ENCODE measurements at regions of chr1 and their contacts with region 1.

Region 1: DNA sequence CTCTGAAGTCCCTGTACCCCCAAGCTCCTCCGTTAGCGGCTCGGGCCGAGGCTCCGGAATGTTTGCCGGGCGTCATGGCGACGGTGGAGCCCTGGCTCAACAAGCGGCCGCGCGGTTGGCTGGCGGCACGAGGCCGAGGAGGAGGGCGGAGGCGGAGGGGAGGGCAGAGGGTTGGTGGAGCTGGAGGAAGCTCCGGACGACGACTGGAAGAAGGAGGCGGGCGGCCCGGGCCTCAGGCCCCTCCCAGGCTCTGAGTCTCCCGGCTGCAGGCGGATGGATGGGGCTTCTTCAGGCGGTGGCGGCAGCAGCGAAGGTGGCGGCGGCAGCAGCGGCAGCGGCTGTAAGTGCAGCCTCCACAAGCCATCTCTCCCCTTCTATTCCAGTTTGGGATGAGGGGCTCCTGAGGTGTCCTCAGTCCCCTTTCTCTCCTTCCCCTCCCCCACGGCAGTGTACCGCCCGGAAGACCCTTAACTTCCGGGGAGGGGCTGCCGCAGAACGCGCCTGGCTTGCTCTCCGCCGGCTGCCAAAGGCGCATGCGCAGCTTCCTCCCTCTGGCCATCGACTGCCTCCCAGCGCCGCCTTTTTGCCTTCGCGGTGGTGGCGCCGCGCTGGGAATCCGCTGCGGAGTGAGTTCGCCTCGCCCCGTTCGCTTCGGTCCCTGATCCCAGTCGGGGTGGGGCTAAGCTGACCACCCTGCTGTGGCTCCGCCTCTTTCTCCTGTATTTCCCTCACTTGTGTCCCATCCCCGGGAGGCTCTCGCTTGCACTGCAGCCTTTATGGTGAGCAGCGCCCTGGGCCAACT is at the starts of genes DNAI4 and MIER1:
- DNase-seq: peak; percentile 99
- H3K4me3 Mint-ChIP-seq: peak within 1 kb of the TSS; percentile 95
- H3K27ac Mint-ChIP-seq: peak within 1 kb of the TSS; percentile 96
- H3K4me1 Mint-ChIP-seq: peaks cover 43% of the 10 kb centered on the region
- H3K27me3 Mint-ChIP-seq: no peaks in the 10 kb centered on the region
- CTCF ChIP-seq: no peak
- total RNA-seq, gene DNAI4: 7.2 and 9.6 TPM in 2 replicates
- total RNA-seq, gene MIER1: 32.1 and 36.5 TPM in 2 replicates

Region 2: GRCh38 chr1:66271216-66271903 is 653.6 kb before region 1 on chr1:
- CTCF ChIA-PET with region 1: interaction called, 4 read pairs
- POLR2A ChIA-PET with region 1: no interaction called
- intact Hi-C with region 1: loop called (anchors 10 kb)
- DNase-seq: peak; percentile 97
- H3K4me3 Mint-ChIP-seq: peak overlapping the region; percentile 49
- H3K27ac Mint-ChIP-seq: peak overlapping the region; percentile 92
- H3K4me1 Mint-ChIP-seq: peaks cover 43% of the 10 kb centered on the region
- H3K27me3 Mint-ChIP-seq: no peaks in the 10 kb centered on the region
- CTCF ChIP-seq: no peak

Region 3: DNA sequence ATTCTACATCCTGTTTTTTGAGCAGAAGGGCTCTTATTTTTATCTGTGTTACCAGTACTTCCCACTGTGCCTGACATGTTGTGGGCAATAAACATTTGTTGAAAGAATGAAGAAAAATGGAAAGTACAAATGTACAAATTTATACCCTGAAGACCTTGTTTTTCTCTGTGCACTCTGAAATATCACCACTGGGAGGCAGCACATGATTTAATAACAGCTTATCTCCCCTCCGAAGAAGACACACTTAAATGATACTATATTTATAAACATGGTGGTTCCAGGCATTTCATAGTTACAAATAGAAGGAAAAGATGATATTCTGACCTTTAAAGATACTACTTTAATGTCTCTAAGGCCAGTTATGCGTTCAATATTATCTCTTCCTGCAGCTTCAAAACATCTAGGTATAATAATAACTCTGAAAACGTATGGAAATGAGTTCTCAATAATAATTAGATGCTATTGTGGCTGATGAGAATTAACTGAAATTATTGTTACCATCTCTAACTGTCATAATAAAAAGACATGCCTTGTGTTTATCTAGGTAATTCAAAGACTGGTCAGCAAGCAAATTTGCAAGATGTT is 159.9 kb before region 1 on chr1:
- CTCF ChIA-PET with region 1: interaction called, 6 read pairs
- POLR2A ChIA-PET with region 1: interaction called, 7 read pairs
- intact Hi-C with region 1: loop called (anchors 1 kb)
- DNase-seq: peak; percentile 65
- H3K4me3 Mint-ChIP-seq: no peak overlapping the region
- H3K27ac Mint-ChIP-seq: no peak overlapping the region
- H3K4me1 Mint-ChIP-seq: no peaks in the 10 kb centered on the region
- H3K27me3 Mint-ChIP-seq: no peaks in the 10 kb centered on the region
- CTCF ChIP-seq: peak; percentile 78

Region 4: DNA sequence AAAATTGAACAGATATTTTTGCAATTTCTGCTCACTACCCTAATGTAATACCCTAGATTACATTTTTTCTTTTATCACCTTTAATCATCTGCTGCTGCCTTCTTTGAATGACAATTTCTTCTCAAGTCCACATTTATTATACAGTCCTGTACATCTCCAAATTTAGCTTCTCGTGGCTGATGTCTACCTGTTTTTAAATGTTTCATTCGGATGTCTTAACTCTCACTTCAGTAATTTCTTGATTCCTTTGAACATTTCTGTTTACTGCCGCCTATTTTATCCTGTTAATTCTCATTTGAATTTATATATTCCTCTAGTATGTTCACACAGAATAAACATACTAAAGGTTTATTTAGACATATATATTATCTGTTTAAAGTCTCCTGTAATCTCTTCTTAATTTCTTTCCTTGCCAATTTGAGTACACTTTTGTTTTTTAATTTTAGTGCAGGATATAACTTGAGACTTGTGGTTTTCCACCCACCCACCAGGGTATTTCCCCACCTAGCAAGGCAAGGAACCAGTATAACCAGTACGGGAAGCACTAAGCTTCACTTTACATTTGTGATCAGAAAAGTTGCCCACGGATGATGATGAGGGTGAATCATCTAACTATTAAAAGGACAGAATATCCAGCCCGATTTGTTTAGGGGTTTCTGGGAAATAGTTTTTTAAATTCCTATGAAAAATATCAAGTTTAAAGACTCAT is 136.6 kb before region 1 on chr1:
- CTCF ChIA-PET with region 1: no interaction called
- POLR2A ChIA-PET with region 1: no interaction called
- intact Hi-C with region 1: no loop called
- DNase-seq: no peak
- H3K4me3 Mint-ChIP-seq: no peak overlapping the region
- H3K27ac Mint-ChIP-seq: no peak overlapping the region
- H3K4me1 Mint-ChIP-seq: no peaks in the 10 kb centered on the region
- H3K27me3 Mint-ChIP-seq: no peaks in the 10 kb centered on the region
- CTCF ChIP-seq: no peak

Region 5: DNA sequence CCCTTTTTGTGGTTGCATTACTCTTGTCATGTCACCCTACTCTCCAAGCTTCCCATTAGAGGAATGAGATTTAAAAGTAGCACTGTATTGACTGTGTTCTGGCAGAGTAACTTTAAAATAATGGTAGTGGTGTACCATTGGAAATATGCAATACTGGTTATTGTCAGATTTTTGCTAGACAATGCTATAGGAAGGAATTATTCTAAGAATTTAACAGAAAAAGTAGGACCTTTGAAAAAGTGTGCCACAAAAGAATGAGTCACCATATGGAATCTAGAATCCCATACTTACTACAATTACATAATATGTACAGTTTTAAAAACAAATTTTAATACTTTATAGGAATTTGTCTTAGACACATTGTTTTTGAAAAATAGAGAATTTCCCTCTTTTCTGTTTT is 13.7 kb after region 1 on chr1:
- CTCF ChIA-PET with region 1: interaction called, 3 read pairs
- POLR2A ChIA-PET with region 1: interaction called, 76 read pairs
- intact Hi-C with region 1: no loop called
- DNase-seq: peak; percentile 38
- H3K4me3 Mint-ChIP-seq: no peak overlapping the region
- H3K27ac Mint-ChIP-seq: peak overlapping the region; percentile 23
- H3K4me1 Mint-ChIP-seq: peaks cover 38% of the 10 kb centered on the region
- H3K27me3 Mint-ChIP-seq: no peaks in the 10 kb centered on the region
- CTCF ChIP-seq: no peak

Region 6: GRCh38 chr1:66944330-66945274 is 19.6 kb after region 1 on chr1:
- CTCF ChIA-PET with region 1: no interaction called
- POLR2A ChIA-PET with region 1: interaction called, 63 read pairs
- intact Hi-C with region 1: no loop called
- DNase-seq: peak; percentile 80
- H3K4me3 Mint-ChIP-seq: no peak overlapping the region
- H3K27ac Mint-ChIP-seq: peak overlapping the region; percentile 93
- H3K4me1 Mint-ChIP-seq: peaks cover 32% of the 10 kb centered on the region
- H3K27me3 Mint-ChIP-seq: no peaks in the 10 kb centered on the region
- CTCF ChIP-seq: no peak

Region 7: GRCh38 chr1:67053785-67054772 is 129.1 kb after region 1 on chr1 and contains the start of gene SLC35D1:
- CTCF ChIA-PET with region 1: no interaction called
- POLR2A ChIA-PET with region 1: interaction called, 11 read pairs
- intact Hi-C with region 1: loop called (anchors 5 kb)
- DNase-seq: peak; percentile 69
- H3K4me3 Mint-ChIP-seq: peak within 1 kb of the TSS; percentile 93
- H3K27ac Mint-ChIP-seq: peak within 1 kb of the TSS; percentile 87
- H3K4me1 Mint-ChIP-seq: peaks cover 30% of the 10 kb centered on the region
- H3K27me3 Mint-ChIP-seq: no peaks in the 10 kb centered on the region
- CTCF ChIP-seq: no peak
- total RNA-seq, gene SLC35D1: 11.5 and 17.7 TPM in 2 replicates

Region 8: DNA sequence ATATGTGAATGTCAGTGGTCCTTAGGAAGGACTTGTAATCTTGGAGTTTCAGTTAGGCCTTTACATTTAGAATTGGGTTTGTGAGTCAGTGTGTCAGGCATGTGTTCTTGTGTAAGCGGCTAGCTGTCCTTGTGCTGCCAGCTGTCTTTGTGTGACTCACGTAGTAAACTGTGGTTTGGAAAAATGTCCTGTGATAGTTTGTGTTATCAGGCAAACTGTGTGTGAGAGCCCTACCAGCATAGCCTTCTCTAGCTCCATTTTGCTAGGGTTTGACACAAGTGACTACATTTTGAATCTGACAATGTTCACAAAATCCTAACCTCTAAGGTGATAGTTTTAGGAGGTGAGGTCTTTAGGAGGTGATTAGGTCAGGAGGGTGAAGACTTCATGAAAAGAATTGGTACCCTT is 135.9 kb after region 1 on chr1:
- CTCF ChIA-PET with region 1: interaction called, 3 read pairs
- POLR2A ChIA-PET with region 1: interaction called, 11 read pairs
- intact Hi-C with region 1: no loop called
- DNase-seq: peak; percentile 93
- H3K4me3 Mint-ChIP-seq: no peak overlapping the region
- H3K27ac Mint-ChIP-seq: peak overlapping the region; percentile 78
- H3K4me1 Mint-ChIP-seq: peaks cover 30% of the 10 kb centered on the region
- H3K27me3 Mint-ChIP-seq: no peaks in the 10 kb centered on the region
- CTCF ChIP-seq: no peak

Region 9: GRCh38 chr1:67250051-67250653 is 325.2 kb after region 1 on chr1:
- CTCF ChIA-PET with region 1: no interaction called
- POLR2A ChIA-PET with region 1: no interaction called
- intact Hi-C with region 1: no loop called
- DNase-seq: peak; percentile 33
- H3K4me3 Mint-ChIP-seq: no peak overlapping the region
- H3K27ac Mint-ChIP-seq: no peak overlapping the region
- H3K4me1 Mint-ChIP-seq: no peaks in the 10 kb centered on the region
- H3K27me3 Mint-ChIP-seq: no peaks in the 10 kb centered on the region
- CTCF ChIP-seq: no peak

Measured in MCF 10A (cell line).